CD8-positive, alpha-beta T cell (primary cell): ENCODE measurements at regions of chr5 and their contacts with region 1.

Region 1: GRCh38 chr5:79020861-79021561 is 35.9 kb upstream of the ARSB start:
- DNase-seq: peak in 5 of 9 experiments; percentile 18 to 54 (median 33)
- ATAC-seq: peak; percentile 38
- H3K4me3 ChIP-seq: no peak overlapping the region
- H3K4me3 Mint-ChIP-seq: no peak overlapping the region
- H3K27ac ChIP-seq: no peak overlapping the region
- H3K27ac Mint-ChIP-seq: no peak overlapping the region
- H3K4me1 ChIP-seq: no peaks in the 10 kb centered on the region
- H3K4me1 Mint-ChIP-seq: peaks cover 11% of the 10 kb centered on the region
- H3K27me3 ChIP-seq: peaks cover 0 to 5% of the 10 kb centered on the region in 2 experiments
- H3K27me3 Mint-ChIP-seq: peaks cover 45% of the 10 kb centered on the region
- CTCF ChIP-seq: peak; percentile 35

Region 2: GRCh38 chr5:79035237-79035636 is 14.2 kb after region 1 on chr5:
- CTCF ChIA-PET with region 1: interaction called, 22 read pairs
- POLR2A ChIA-PET with region 1: no interaction called
- intact Hi-C with region 1: no loop called
- DNase-seq: no peak
- ATAC-seq: no peak
- H3K4me3 ChIP-seq: no peak overlapping the region
- H3K4me3 Mint-ChIP-seq: no peak overlapping the region
- H3K27ac ChIP-seq: no peak overlapping the region
- H3K27ac Mint-ChIP-seq: no peak overlapping the region
- H3K4me1 ChIP-seq: no peaks in the 10 kb centered on the region
- H3K4me1 Mint-ChIP-seq: no peaks in the 10 kb centered on the region
- H3K27me3 ChIP-seq: no peaks in the 10 kb centered on the region
- H3K27me3 Mint-ChIP-seq: peaks cover 3% of the 10 kb centered on the region
- CTCF ChIP-seq: no peak

Region 3: GRCh38 chr5:79048437-79048836 is 27.4 kb after region 1 on chr5:
- CTCF ChIA-PET with region 1: interaction called, 11 read pairs
- POLR2A ChIA-PET with region 1: no interaction called
- intact Hi-C with region 1: no loop called
- DNase-seq: no peak
- ATAC-seq: no peak
- H3K4me3 ChIP-seq: no peak overlapping the region
- H3K4me3 Mint-ChIP-seq: no peak overlapping the region
- H3K27ac ChIP-seq: no peak overlapping the region
- H3K27ac Mint-ChIP-seq: no peak overlapping the region
- H3K4me1 ChIP-seq: no peaks in the 10 kb centered on the region
- H3K4me1 Mint-ChIP-seq: no peaks in the 10 kb centered on the region
- H3K27me3 ChIP-seq: no peaks in the 10 kb centered on the region
- H3K27me3 Mint-ChIP-seq: peaks cover 9% of the 10 kb centered on the region
- CTCF ChIP-seq: no peak

Region 4: DNA sequence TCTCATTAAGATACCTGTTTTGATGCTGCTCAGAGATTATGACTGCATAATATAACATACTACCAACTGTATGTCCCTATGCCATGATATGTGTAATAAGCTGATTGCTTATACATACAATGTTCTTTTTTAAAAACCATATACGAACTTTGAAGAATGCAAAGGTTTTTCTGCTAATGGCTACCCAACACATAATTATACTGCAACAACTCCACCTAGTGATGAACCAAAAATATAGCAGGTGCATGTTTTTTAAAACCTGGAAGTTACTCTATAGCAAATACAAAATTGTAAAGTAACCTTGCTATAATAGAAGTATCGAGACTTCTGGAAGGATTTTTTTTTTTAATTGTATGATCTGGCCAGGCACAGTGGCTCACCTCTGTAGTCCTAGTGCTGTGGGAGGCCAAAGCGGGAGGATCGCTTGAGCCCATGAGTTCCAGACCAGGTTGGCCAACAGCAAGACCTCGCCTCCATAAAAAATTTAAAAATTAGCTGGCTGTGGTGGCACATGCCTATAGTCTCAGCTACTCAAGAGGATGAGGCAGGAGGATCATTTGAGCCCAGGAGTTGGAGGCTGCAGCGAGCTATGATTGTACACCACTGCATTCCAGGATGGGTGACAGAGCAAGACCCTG is 443.8 kb after region 1 on chr5:
- CTCF ChIA-PET with region 1: interaction called, 15 read pairs
- POLR2A ChIA-PET with region 1: no interaction called
- intact Hi-C with region 1: loop called (anchors 1 to 2 kb)
- DNase-seq: peak in 2 of 9 experiments; percentile 15 to 42
- ATAC-seq: peak; percentile 66
- H3K4me3 ChIP-seq: no peak overlapping the region
- H3K4me3 Mint-ChIP-seq: no peak overlapping the region
- H3K27ac ChIP-seq: no peak overlapping the region
- H3K27ac Mint-ChIP-seq: no peak overlapping the region
- H3K4me1 ChIP-seq: no peaks in the 10 kb centered on the region
- H3K4me1 Mint-ChIP-seq: peaks cover 3% of the 10 kb centered on the region
- H3K27me3 ChIP-seq: no peaks in the 10 kb centered on the region
- H3K27me3 Mint-ChIP-seq: no peaks in the 10 kb centered on the region
- CTCF ChIP-seq: peak; percentile 66

Region 5: GRCh38 chr5:79857714-79858409 is 836.9 kb after region 1 on chr5:
- CTCF ChIA-PET with region 1: no interaction called
- POLR2A ChIA-PET with region 1: no interaction called
- intact Hi-C with region 1: loop called (anchors 2 to 5 kb)
- DNase-seq: peak; percentile 56 to 85 (median 76)
- ATAC-seq: peak; percentile 58
- H3K4me3 ChIP-seq: no peak overlapping the region
- H3K4me3 Mint-ChIP-seq: no peak overlapping the region
- H3K27ac ChIP-seq: no peak overlapping the region
- H3K27ac Mint-ChIP-seq: no peak overlapping the region
- H3K4me1 ChIP-seq: peaks cover 5% of the 10 kb centered on the region
- H3K4me1 Mint-ChIP-seq: peaks cover 2% of the 10 kb centered on the region
- H3K27me3 ChIP-seq: no peaks in the 10 kb centered on the region
- H3K27me3 Mint-ChIP-seq: peaks cover 2% of the 10 kb centered on the region
- CTCF ChIP-seq: peak; percentile 96

Region 6: GRCh38 chr5:80083101-80083890 is 1062.3 kb after region 1 on chr5:
- CTCF ChIA-PET with region 1: no interaction called
- POLR2A ChIA-PET with region 1: no interaction called
- intact Hi-C with region 1: loop called in 1 of 2 experiments (anchors 10 kb)
- DNase-seq: peak in 5 of 9 experiments; percentile 15 to 69 (median 52)
- ATAC-seq: peak; percentile 83
- H3K4me3 ChIP-seq: peak overlapping the region; percentile 10 to 25
- H3K4me3 Mint-ChIP-seq: peak overlapping the region; percentile 78
- H3K27ac ChIP-seq: no peak overlapping the region
- H3K27ac Mint-ChIP-seq: peak overlapping the region; percentile 74
- H3K4me1 ChIP-seq: peaks cover 10% of the 10 kb centered on the region
- H3K4me1 Mint-ChIP-seq: peaks cover 11% of the 10 kb centered on the region
- H3K27me3 ChIP-seq: no peaks in the 10 kb centered on the region
- H3K27me3 Mint-ChIP-seq: no peaks in the 10 kb centered on the region
- CTCF ChIP-seq: peak; percentile 61